ENCODE measurements at regions of chr10 and their contacts with region 1.

Region 1: DNA sequence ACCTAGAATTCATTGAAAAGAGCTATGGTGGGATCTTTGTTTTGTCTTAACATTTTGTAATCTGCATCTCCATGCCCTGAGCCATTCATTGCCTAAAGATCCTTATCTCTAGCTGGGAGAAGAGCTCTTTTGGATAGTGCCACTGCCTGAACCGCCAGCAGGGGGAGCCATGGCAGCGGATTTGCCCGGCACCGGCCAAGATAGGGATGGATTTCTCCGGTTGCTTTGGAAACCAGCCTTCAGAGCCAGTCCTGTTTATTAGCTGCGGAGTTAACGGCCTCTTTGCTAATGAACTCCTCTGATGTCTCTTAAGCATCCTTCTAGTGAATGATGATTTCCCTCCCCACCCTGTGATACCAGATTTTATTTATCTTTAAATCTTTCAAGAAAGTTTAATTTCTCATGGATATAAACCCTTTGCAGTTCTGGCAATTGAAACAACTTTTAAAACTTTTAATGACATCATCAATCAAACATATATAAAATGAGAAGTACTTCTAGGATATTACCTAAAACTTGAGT is 58.2 kb upstream of the LYZL2 start:
- DNase-seq: no peak
- H3K4me3 ChIP-seq: no peak overlapping the region
- H3K27me3 ChIP-seq: peaks cover 2% of the 10 kb centered on the region; the same call in 1 of the 2 replicates
- CTCF ChIP-seq: peak; percentile 97

Region 2: DNA sequence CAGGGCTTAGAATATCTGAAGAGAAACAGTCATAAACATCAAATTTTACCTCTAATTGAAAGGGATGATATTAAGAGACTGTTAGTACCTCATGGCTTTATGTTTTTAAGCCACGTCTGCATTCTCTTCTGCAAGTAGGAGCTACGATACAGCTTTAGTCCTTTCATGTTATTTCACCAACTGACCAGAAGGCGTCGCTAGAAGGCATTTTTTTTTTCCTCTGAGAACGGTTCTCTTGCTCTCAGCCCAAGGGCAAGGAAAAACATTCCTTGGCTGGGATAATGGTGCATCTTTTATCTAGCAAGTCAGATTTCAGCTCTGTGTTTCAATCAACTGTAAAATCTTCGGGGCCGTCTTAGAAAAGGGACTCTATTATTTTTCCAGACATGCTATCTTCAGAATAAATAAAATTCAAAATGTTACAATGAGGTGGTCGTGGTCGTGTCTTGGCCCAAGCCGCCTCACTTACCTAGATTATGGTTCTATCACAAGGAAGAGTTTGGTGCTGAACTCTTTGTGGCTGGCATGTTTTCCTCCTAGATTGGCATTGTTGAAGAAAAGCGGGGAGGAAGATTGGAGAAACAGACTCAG is 16.6 kb before region 1 on chr10:
- CTCF ChIA-PET with region 1: interaction called, 25 read pairs
- POLR2A ChIA-PET with region 1: no interaction called
- DNase-seq: peak; percentile 59
- H3K4me3 ChIP-seq: no peak overlapping the region
- H3K27me3 ChIP-seq: peaks cover 2% of the 10 kb centered on the region; the same call in 1 of the 2 replicates
- CTCF ChIP-seq: peak; percentile 74

Measured in BJ (cell line).